Heart left ventricle (tissue), 16 donors: ENCODE measurements at regions of chr18 and their contacts with region 1.

Region 1: DNA sequence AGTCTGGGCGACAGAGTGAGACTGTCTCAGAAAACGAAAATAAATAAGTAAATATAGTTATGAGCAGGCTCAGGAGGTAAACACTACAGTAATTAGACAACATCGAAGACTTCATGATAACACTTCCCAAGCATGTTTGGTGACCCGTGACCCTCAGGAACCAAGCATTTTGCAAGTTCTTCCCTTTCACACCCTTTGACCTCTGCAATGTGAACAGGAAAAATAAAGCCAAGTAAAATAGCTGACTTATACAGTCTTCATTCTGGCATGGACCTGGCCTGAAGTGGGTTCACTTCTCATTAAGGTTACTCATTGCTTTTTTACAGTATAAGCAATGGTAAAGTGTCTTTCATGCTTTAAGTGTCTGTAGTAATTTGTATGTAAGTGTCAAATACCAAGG is 15.3 kb upstream of the TGIF1 start:
- DNase-seq: no peak
- ATAC-seq: no peak
- H3K4me3 ChIP-seq: no peak overlapping the region
- H3K27ac ChIP-seq: no peak overlapping the region
- H3K4me1 ChIP-seq: no peaks in the 10 kb centered on the region
- H3K27me3 ChIP-seq: no peaks in the 10 kb centered on the region
- CTCF ChIP-seq: no peak
- POLR2A ChIP-seq: no peak

Region 2: DNA sequence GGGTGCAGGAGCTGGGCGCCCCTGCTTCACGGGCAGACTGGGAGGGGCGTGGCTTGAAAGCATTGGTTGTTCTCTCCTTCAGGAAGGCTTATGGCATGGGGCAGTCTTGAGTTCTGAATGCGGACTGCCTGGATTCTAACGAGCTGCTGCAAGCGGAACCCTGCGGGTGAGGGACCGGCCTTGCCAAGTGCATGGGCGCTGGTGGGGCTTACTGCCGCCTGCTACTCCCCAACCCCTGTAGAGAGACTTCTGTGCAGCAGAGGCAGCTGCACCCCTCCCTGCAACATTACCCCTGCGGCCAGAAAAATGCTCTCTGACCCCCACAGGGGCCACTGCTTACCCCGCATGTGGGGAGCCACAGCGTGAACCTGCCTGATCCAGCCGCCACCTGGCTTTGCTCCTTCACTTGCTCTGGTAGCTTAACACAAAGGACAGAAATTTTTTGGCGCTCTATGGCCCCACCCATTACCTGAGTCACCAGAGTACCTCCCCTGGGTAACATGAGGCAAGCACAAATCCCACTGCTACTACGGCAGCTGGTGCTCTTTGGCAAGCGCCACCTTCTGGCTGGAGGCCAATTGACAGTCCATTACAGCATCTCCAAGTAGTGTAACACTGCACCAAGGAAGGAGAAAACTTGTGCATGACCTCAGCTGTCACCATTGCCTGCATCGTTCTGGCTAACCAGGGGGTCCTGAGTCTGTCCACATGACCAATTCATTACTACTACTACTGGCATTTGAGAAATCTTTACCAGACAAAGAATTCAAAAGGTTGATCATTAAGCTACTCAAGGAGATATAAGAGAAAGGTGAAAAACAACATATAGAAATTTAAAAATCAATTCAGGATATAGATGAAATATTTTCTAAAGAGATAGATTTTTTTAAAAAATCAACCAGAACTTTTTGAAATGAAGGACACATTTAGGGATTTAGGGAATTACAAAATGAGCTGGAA is 137.4 kb before region 1 on chr18:
- intact Hi-C with region 1: loop called in 1 of 10 experiments (anchors 5 kb)
- DNase-seq: peak; percentile 76 to 89 (median 84)
- ATAC-seq: peak; percentile 85 to 93 (median 92)
- H3K4me3 ChIP-seq: peak overlapping the region; percentile 15 to 76 (median 55)
- H3K27ac ChIP-seq: peak overlapping the region in 3 of 12 donors; percentile 7 to 39 (median 17)
- H3K4me1 ChIP-seq: peaks cover 0 to 12% (median 3%) of the 10 kb centered on the region in 12 donors
- H3K27me3 ChIP-seq: peaks cover 0 to 4% (median 0%) of the 10 kb centered on the region in 9 donors
- CTCF ChIP-seq: peak in 11 of 12 donors; percentile 21 to 53 (median 37)
- POLR2A ChIP-seq: no peak

Region 3: GRCh38 chr18:3368193-3368592 is 66.5 kb before region 1 on chr18:
- intact Hi-C with region 1: no loop called
- DNase-seq: no peak
- ATAC-seq: no peak
- H3K4me3 ChIP-seq: no peak overlapping the region
- H3K27ac ChIP-seq: no peak overlapping the region
- H3K4me1 ChIP-seq: no peaks in the 10 kb centered on the region
- H3K27me3 ChIP-seq: no peaks in the 10 kb centered on the region
- CTCF ChIP-seq: no peak
- POLR2A ChIP-seq: no peak